ENCODE measurements at regions of chr11 and their contacts with region 1.

Region 1: DNA sequence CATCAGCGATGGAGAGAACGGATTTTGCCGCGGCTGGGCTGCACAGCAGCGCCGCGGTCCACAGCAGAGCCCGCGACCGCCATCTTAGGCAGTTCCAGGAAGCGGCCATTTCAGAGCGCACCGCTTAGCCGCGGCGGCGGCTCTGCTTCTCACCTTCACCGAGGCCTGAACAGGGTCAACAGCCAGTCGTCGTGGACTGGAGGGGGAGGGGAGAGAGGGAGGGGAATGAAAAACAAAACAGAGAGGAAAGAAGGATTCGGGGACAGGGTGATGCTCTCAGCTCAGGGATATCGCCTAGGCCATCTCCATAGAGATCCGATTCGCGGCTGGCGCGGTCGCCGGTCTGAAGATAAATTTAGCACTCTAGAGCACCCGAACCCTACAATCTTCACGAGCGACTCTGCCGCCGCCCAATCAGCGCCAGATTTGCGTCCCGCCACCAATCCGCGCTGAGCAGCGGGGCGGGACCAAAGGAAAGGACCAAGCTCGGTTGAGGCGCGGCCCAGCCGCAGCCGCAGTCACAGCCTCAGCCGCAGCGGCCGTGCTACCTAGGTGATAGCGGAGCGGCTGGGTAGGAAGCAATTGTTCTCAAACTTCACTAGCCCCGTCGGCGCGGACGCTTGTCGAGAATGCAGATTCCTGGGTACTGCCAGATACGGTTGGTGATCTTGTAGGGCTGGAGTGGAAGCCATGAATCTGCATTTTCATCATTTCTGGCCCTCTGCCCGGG is at the start of gene ZBED5:
- DNase-seq: peak; percentile 98
- H3K4me3 ChIP-seq: peak within 1 kb of the TSS; percentile 69 to 72
- H3K27ac ChIP-seq: peak within 1 kb of the TSS; percentile 96 to 98
- H3K4me1 ChIP-seq: no peaks in the 10 kb centered on the region
- H3K27me3 ChIP-seq: no peaks in the 10 kb centered on the region
- CTCF ChIP-seq: peak in 1 of 4 experiments; percentile 9
- POLR2A ChIP-seq: peak; percentile 98
- total RNA-seq, gene ZBED5: 26.2 to 33.0 TPM

Region 2: DNA sequence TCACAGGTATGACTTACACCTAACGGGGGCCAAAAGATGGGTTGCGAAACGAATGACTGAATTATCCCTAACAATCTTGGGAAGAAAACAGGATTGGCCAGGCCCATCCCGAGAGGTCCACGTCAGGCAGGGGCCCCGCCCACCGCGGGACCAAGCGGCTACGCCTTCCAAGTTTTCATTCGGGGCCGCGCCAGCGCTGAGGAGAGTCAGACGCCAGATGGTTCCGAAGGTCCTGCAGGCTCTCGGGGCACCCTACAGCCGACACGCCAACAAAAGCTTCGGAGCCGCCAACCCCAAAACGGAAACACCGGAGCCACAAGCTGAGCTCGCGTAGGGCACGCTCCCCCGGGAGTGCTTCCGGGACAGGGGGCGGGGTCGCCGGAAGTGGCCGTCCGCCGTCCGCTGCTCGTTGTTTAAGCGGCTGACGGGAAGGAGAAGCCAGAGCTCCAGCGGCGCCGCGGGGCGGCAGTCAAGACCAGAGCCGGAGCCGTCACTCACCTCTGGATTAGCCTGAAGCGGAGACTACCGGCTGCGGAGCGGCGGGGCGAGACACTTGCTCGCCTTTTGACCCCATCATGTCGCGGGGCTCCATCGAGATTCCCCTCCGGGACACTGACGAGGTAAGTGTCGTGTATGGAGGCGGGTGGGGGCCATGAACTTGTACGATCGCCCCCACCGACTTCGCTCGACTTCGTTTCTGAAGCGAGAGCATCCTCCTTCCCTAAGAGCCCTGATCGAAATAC is 106.9 kb before region 1 on chr11 and contains the start of gene CTR9:
- intact Hi-C with region 1: loop called (anchors 5 kb)
- DNase-seq: peak; percentile 91
- H3K4me3 ChIP-seq: peak within 1 kb of the TSS; percentile 75 to 88
- H3K27ac ChIP-seq: peak within 1 kb of the TSS; percentile 95 to 99
- H3K4me1 ChIP-seq: no peaks in the 10 kb centered on the region
- H3K27me3 ChIP-seq: no peaks in the 10 kb centered on the region
- CTCF ChIP-seq: peak in 3 of 4 experiments; percentile 10 to 29 (median 23)
- POLR2A ChIP-seq: peak; percentile 93
- total RNA-seq, gene CTR9: 23.6 to 28.3 TPM

Region 3: GRCh38 chr11:10808553-10809372 is 49.1 kb before region 1 on chr11 and contains the start of gene EIF4G2:
- intact Hi-C with region 1: loop called (anchors 1 kb)
- DNase-seq: peak; percentile 99
- H3K4me3 ChIP-seq: peak within 1 kb of the TSS; percentile 73 to 81
- H3K27ac ChIP-seq: peak within 1 kb of the TSS; percentile 94 to 97
- H3K4me1 ChIP-seq: peaks cover 10% of the 10 kb centered on the region
- H3K27me3 ChIP-seq: no peaks in the 10 kb centered on the region
- CTCF ChIP-seq: peak in 1 of 4 experiments; percentile 37
- POLR2A ChIP-seq: peak; percentile 99
- total RNA-seq, gene EIF4G2: 382 to 500 TPM

Region 4: GRCh38 chr11:10899121-10899830 is 41.4 kb after region 1 on chr11:
- intact Hi-C with region 1: loop called (anchors 5 kb)
- DNase-seq: peak; percentile 88
- H3K4me3 ChIP-seq: no peak overlapping the region
- H3K27ac ChIP-seq: peak overlapping the region; percentile 88 to 92
- H3K4me1 ChIP-seq: peaks cover 20% of the 10 kb centered on the region
- H3K27me3 ChIP-seq: no peaks in the 10 kb centered on the region
- CTCF ChIP-seq: no peak
- POLR2A ChIP-seq: no peak

Region 5: GRCh38 chr11:10933455-10934292 is 75.8 kb after region 1 on chr11:
- intact Hi-C with region 1: loop called (anchors 5 kb)
- DNase-seq: peak; percentile 91
- H3K4me3 ChIP-seq: peak overlapping the region; percentile 19 to 34
- H3K27ac ChIP-seq: peak overlapping the region; percentile 81 to 84
- H3K4me1 ChIP-seq: no peaks in the 10 kb centered on the region
- H3K27me3 ChIP-seq: no peaks in the 10 kb centered on the region
- CTCF ChIP-seq: peak; percentile 88 to 98 (median 96)
- POLR2A ChIP-seq: peak; percentile 32

Measured in prostate gland (tissue), 2 donors.